ENCODE measurements at regions of chr9 and their contacts with region 1.

Region 1: GRCh38 chr9:5628530-5629311 is at the start of gene RIC1:
- DNase-seq: peak; percentile 96
- ATAC-seq: peak; percentile 79
- H3K4me3 ChIP-seq: peak within 1 kb of the TSS; percentile 82 to 99 (median 92)
- H3K4me3 Mint-ChIP-seq: peak within 1 kb of the TSS; percentile 98
- H3K27ac ChIP-seq: peak within 1 kb of the TSS; percentile 85 to 93
- H3K27ac Mint-ChIP-seq: peak within 1 kb of the TSS; percentile 99
- H3K4me1 ChIP-seq: peaks cover 52 to 55% of the 10 kb centered on the region in 2 donors
- H3K4me1 Mint-ChIP-seq: peaks cover 59% of the 10 kb centered on the region
- H3K27me3 ChIP-seq: no peaks in the 10 kb centered on the region
- H3K27me3 Mint-ChIP-seq: no peaks in the 10 kb centered on the region
- CTCF ChIP-seq: no peak
- total RNA-seq, gene RIC1: 58.8 and 58.9 TPM in 2 replicates

Region 2: GRCh38 chr9:4792572-4793458 is 835.9 kb before region 1 on chr9 and contains the start of gene RCL1:
- CTCF ChIA-PET with region 1: no interaction called
- POLR2A ChIA-PET with region 1: interaction called, 6 read pairs
- intact Hi-C with region 1: loop called (anchors 1 kb)
- DNase-seq: peak; percentile 97
- ATAC-seq: peak; percentile 91
- H3K4me3 ChIP-seq: peak within 1 kb of the TSS; percentile 81 to 96 (median 94)
- H3K4me3 Mint-ChIP-seq: peak within 1 kb of the TSS; percentile 98
- H3K27ac ChIP-seq: peak within 1 kb of the TSS; percentile 89 to 97
- H3K27ac Mint-ChIP-seq: peak within 1 kb of the TSS; percentile 97
- H3K4me1 ChIP-seq: peaks cover 22 to 30% of the 10 kb centered on the region in 2 donors
- H3K4me1 Mint-ChIP-seq: peaks cover 36% of the 10 kb centered on the region
- H3K27me3 ChIP-seq: no peaks in the 10 kb centered on the region
- H3K27me3 Mint-ChIP-seq: peaks cover 1% of the 10 kb centered on the region
- CTCF ChIP-seq: no peak
- total RNA-seq, gene RCL1: 21.7 and 29.6 TPM in 2 replicates

Region 3: GRCh38 chr9:5593904-5594303 is 34.8 kb before region 1 on chr9:
- CTCF ChIA-PET with region 1: interaction called, 13 read pairs
- POLR2A ChIA-PET with region 1: interaction called, 6 read pairs
- intact Hi-C with region 1: loop called (anchors 5 kb)
- DNase-seq: peak; percentile 84
- ATAC-seq: peak; percentile 57
- H3K4me3 ChIP-seq: no peak overlapping the region
- H3K4me3 Mint-ChIP-seq: peak overlapping the region; percentile 50
- H3K27ac ChIP-seq: peak overlapping the region in 1 of 2 donors; percentile 40
- H3K27ac Mint-ChIP-seq: peak overlapping the region; percentile 69
- H3K4me1 ChIP-seq: peaks cover 41 to 44% of the 10 kb centered on the region in 2 donors
- H3K4me1 Mint-ChIP-seq: peaks cover 68% of the 10 kb centered on the region
- H3K27me3 ChIP-seq: no peaks in the 10 kb centered on the region
- H3K27me3 Mint-ChIP-seq: no peaks in the 10 kb centered on the region
- CTCF ChIP-seq: no peak

Region 4: DNA sequence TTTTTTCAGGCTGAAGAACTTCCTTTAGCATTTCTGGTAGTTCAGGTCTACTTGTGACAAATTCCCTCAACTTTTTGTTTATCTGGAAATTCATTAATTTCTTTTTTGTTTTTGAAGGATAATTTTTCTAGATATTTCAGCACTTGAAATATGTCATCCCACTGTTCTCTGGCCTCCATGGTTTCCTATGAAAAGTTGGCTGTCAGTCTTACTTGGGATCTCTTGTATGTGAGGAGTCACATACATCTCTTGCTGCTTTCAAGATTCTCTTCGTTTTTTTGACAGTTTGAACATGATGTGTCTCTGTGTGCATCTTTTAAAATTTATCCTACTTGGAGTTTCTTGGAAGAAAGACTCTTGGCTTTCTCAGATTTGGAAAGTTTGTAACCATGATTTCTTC is 79.7 kb after region 1 on chr9:
- CTCF ChIA-PET with region 1: no interaction called
- POLR2A ChIA-PET with region 1: no interaction called
- intact Hi-C with region 1: loop called (anchors 5 kb)
- DNase-seq: no peak
- ATAC-seq: no peak
- H3K4me3 ChIP-seq: no peak overlapping the region
- H3K4me3 Mint-ChIP-seq: no peak overlapping the region
- H3K27ac ChIP-seq: no peak overlapping the region
- H3K27ac Mint-ChIP-seq: no peak overlapping the region
- H3K4me1 ChIP-seq: peaks cover 3 to 7% of the 10 kb centered on the region in 2 donors
- H3K4me1 Mint-ChIP-seq: peaks cover 10% of the 10 kb centered on the region
- H3K27me3 ChIP-seq: no peaks in the 10 kb centered on the region
- H3K27me3 Mint-ChIP-seq: no peaks in the 10 kb centered on the region
- CTCF ChIP-seq: no peak

Region 5: DNA sequence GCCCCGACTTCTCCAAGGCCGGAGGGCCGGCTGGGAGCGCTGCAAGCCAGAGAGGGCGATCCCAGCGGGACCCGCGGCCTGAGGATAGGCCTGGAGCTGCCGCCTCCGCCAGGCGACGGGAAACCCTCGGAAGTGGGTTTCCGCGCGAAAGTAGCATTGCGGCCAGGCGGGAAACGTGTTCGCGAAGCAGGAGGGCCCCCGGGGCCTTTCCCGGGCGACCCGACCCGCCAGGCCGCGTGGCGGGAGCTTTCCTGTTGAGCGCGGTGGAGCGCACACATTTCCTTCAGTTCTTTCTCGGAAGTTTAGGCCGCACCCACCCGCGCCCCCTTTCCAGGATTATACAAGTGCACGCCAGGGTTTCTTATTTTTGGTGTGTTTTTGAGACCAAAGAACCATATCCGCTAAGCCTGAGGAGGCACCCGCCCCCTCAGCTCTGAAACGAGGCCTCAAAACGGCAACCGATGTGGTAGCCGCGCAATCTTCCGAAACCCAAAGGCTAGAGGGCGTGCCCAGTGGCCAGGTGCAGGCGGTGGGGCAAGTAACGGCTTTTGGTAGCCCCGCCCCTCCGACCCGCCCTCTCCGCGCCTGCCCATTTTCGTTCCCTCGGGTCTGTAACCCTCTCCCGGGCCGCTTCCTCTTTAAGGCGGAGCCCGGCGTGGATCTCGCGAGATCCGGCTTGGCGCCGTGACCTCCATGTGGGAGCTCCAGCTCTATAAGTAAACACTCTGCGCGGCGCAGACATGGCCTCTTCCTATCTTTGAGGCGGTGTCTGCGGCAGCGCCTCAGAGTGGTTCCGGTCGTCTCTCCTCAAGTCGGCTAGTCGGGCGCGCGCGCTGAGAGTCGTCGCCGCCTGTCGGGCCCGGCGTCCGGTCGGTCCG is 784.0 kb after region 1 on chr9 and contains the start of gene UHRF2:
- CTCF ChIA-PET with region 1: no interaction called
- POLR2A ChIA-PET with region 1: no interaction called
- intact Hi-C with region 1: loop called (anchors 5 kb)
- DNase-seq: peak; percentile 100
- ATAC-seq: peak; percentile 87
- H3K4me3 ChIP-seq: peak within 1 kb of the TSS; percentile 72 to 89 (median 87)
- H3K4me3 Mint-ChIP-seq: peak within 1 kb of the TSS; percentile 88
- H3K27ac ChIP-seq: peak within 1 kb of the TSS; percentile 95 to 97
- H3K27ac Mint-ChIP-seq: peak within 1 kb of the TSS; percentile 98
- H3K4me1 ChIP-seq: peaks cover 61 to 62% of the 10 kb centered on the region in 2 donors
- H3K4me1 Mint-ChIP-seq: peaks cover 58% of the 10 kb centered on the region
- H3K27me3 ChIP-seq: no peaks in the 10 kb centered on the region
- H3K27me3 Mint-ChIP-seq: no peaks in the 10 kb centered on the region
- CTCF ChIP-seq: no peak
- total RNA-seq, gene UHRF2: 153 and 171 TPM in 2 replicates